ENCODE measurements at regions of chr2 and their contacts with region 1.

Region 1: DNA sequence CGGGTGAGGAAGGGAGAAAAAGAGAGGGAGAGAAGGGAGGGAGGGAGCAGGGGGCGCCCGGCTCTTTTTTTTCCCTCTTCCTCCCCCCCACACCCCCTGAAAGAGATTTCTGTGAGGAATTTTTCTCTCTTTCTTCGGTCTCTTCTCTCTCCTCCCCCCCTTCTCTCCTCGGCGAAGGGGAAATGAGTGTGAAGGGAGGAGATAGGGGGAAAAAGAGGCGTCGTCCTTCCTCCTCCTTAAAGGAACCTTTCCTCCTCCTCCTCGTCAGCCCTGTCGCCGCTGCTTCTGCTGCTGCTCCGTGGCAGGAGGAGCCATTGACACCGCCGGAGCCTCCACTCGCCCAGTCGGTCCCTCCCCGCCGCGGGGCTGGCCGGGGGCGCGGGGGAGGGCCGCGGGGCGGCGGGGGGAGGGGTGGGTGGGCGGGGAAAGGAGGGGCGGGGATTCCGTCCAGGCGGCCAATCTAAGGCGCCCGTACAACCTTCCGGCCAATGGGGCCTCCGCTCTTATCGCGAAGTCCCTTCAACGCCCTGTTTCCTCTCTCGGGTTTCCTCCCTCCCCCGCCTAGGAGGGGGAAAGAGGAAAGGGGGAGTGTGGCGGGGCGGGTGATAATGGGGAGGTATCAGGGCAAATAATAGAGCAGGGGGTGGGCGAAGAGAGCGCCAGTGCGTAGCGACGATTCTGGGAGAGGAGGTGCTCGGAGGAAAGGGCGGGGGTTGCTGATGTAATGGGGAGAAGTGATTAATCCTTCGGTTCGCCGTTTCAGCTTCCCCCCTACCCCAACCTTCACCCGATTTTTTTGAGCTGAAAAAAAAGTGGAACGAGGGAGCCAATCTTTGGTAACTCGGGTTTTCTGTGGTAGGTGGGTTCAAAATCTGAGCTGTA is at the start of gene FBXO11:
- DNase-seq: peak; percentile 87 to 99 (median 93)
- ATAC-seq: peak; percentile 77
- H3K4me3 ChIP-seq: peak within 1 kb of the TSS; percentile 86
- H3K4me3 Mint-ChIP-seq: peak within 1 kb of the TSS; percentile 85
- H3K27ac ChIP-seq: peak within 1 kb of the TSS; percentile 91 to 96
- H3K27ac Mint-ChIP-seq: peak within 1 kb of the TSS; percentile 91
- H3K4me1 ChIP-seq: peaks cover 8% of the 10 kb centered on the region
- H3K4me1 Mint-ChIP-seq: peaks cover 52% of the 10 kb centered on the region
- H3K27me3 ChIP-seq: no peaks in the 10 kb centered on the region
- H3K27me3 Mint-ChIP-seq: no peaks in the 10 kb centered on the region
- CTCF ChIP-seq: peak; percentile 60
- total RNA-seq, gene FBXO11: 121 to 126 TPM

Region 2: DNA sequence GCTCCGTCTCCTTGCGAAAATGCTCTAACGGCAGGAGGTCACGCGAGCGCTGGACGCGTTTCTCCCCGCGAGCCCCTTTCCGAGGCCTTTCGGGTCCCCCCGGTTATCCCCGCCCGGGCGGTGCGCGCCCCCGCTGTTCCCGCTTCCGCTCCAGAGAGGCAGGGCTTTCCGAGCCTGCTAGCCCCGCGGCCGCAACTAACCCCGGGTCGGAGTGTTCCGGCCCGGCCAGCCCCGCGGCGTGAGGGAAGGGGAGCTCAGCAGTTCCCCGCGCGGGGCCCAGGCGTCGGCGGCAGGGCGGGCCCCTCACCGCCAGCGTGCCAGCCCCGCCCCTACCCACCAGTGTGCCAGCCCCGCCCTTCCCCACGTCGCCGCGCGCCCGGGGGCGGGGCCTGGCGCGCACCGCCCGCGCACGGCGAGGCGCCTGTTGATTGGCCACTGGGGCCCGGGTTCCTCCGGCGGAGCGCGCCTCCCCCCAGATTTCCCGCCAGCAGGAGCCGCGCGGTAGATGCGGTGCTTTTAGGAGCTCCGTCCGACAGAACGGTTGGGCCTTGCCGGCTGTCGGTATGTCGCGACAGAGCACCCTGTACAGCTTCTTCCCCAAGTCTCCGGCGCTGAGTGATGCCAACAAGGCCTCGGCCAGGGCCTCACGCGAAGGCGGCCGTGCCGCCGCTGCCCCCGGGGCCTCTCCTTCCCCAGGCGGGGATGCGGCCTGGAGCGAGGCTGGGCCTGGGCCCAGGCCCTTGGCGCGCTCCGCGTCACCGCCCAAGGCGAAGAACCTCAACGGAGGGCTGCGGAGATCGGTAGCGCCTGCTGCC is 123.5 kb before region 1 on chr2 and contains the start of gene MSH6:
- CTCF ChIA-PET with region 1: interaction called, 4 read pairs
- POLR2A ChIA-PET with region 1: interaction called, 20 read pairs
- intact Hi-C with region 1: no loop called
- DNase-seq: peak; percentile 75 to 97 (median 86)
- ATAC-seq: peak; percentile 93
- H3K4me3 ChIP-seq: peak within 1 kb of the TSS; percentile 78
- H3K4me3 Mint-ChIP-seq: peak within 1 kb of the TSS; percentile 95
- H3K27ac ChIP-seq: peak within 1 kb of the TSS; percentile 64 to 84
- H3K27ac Mint-ChIP-seq: peak within 1 kb of the TSS; percentile 86
- H3K4me1 ChIP-seq: peaks cover 39% of the 10 kb centered on the region
- H3K4me1 Mint-ChIP-seq: peaks cover 29% of the 10 kb centered on the region
- H3K27me3 ChIP-seq: no peaks in the 10 kb centered on the region
- H3K27me3 Mint-ChIP-seq: no peaks in the 10 kb centered on the region
- CTCF ChIP-seq: no peak
- total RNA-seq, gene MSH6: 37.3 to 38.5 TPM

Region 3: GRCh38 chr2:47917276-47917961 is 11.0 kb after region 1 on chr2:
- CTCF ChIA-PET with region 1: interaction called, 4 read pairs
- POLR2A ChIA-PET with region 1: interaction called, 17 read pairs
- intact Hi-C with region 1: no loop called
- DNase-seq: peak in 1 of 14 experiments; percentile 18
- ATAC-seq: no peak
- H3K4me3 ChIP-seq: no peak overlapping the region
- H3K4me3 Mint-ChIP-seq: no peak overlapping the region
- H3K27ac ChIP-seq: no peak overlapping the region
- H3K27ac Mint-ChIP-seq: no peak overlapping the region
- H3K4me1 ChIP-seq: no peaks in the 10 kb centered on the region
- H3K4me1 Mint-ChIP-seq: peaks cover 10% of the 10 kb centered on the region
- H3K27me3 ChIP-seq: no peaks in the 10 kb centered on the region
- H3K27me3 Mint-ChIP-seq: no peaks in the 10 kb centered on the region
- CTCF ChIP-seq: no peak

Region 4: GRCh38 chr2:48107326-48107925 is 201.0 kb after region 1 on chr2:
- CTCF ChIA-PET with region 1: interaction called, 6 read pairs
- POLR2A ChIA-PET with region 1: interaction called, 5 read pairs
- intact Hi-C with region 1: loop called (anchors 1 to 2 kb)
- DNase-seq: peak in 2 of 14 experiments; percentile 20 to 34
- ATAC-seq: no peak
- H3K4me3 ChIP-seq: no peak overlapping the region
- H3K4me3 Mint-ChIP-seq: no peak overlapping the region
- H3K27ac ChIP-seq: no peak overlapping the region
- H3K27ac Mint-ChIP-seq: no peak overlapping the region
- H3K4me1 ChIP-seq: peaks cover 18% of the 10 kb centered on the region
- H3K4me1 Mint-ChIP-seq: peaks cover 11% of the 10 kb centered on the region
- H3K27me3 ChIP-seq: no peaks in the 10 kb centered on the region
- H3K27me3 Mint-ChIP-seq: no peaks in the 10 kb centered on the region
- CTCF ChIP-seq: no peak

Region 5: GRCh38 chr2:48347712-48348111 is 441.3 kb after region 1 on chr2:
- CTCF ChIA-PET with region 1: no interaction called
- POLR2A ChIA-PET with region 1: no interaction called
- intact Hi-C with region 1: loop called in 1 of 2 experiments (anchors 2 kb)
- DNase-seq: peak in 1 of 14 experiments; percentile 38
- ATAC-seq: no peak
- H3K4me3 ChIP-seq: no peak overlapping the region
- H3K4me3 Mint-ChIP-seq: peak overlapping the region; percentile 6
- H3K27ac ChIP-seq: no peak overlapping the region
- H3K27ac Mint-ChIP-seq: peak overlapping the region; percentile 48
- H3K4me1 ChIP-seq: peaks cover 41% of the 10 kb centered on the region
- H3K4me1 Mint-ChIP-seq: peaks cover 67% of the 10 kb centered on the region
- H3K27me3 ChIP-seq: no peaks in the 10 kb centered on the region
- H3K27me3 Mint-ChIP-seq: no peaks in the 10 kb centered on the region
- CTCF ChIP-seq: no peak

Region 6: DNA sequence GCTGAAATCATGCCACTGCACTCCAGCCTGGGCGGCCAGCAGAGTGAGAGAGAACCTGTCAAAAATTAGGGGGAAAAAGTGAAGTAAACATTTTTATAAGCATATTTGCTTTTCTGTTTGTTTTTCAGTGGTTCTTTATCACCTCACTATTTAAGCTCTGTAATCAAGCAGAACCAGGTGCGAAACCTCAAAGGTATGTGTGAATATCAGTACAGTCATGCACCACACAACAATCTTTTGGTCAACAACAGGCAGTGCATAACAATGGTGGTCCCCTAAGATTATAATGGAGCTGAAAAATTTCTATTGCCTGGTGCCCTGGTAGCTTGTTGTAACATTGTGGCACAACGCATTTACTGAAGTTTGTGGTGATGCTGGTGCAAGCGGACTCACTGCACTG is 456.1 kb after region 1 on chr2:
- CTCF ChIA-PET with region 1: no interaction called
- POLR2A ChIA-PET with region 1: no interaction called
- intact Hi-C with region 1: no loop called
- DNase-seq: peak in 1 of 14 experiments; percentile 44
- ATAC-seq: no peak
- H3K4me3 ChIP-seq: no peak overlapping the region
- H3K4me3 Mint-ChIP-seq: no peak overlapping the region
- H3K27ac ChIP-seq: no peak overlapping the region
- H3K27ac Mint-ChIP-seq: no peak overlapping the region
- H3K4me1 ChIP-seq: peaks cover 12% of the 10 kb centered on the region
- H3K4me1 Mint-ChIP-seq: peaks cover 40% of the 10 kb centered on the region
- H3K27me3 ChIP-seq: no peaks in the 10 kb centered on the region
- H3K27me3 Mint-ChIP-seq: no peaks in the 10 kb centered on the region
- CTCF ChIP-seq: no peak

Region 7: GRCh38 chr2:48448274-48449061 is 542.1 kb after region 1 on chr2:
- CTCF ChIA-PET with region 1: no interaction called
- POLR2A ChIA-PET with region 1: interaction called, 4 read pairs
- intact Hi-C with region 1: loop called in 1 of 2 experiments (anchors 2 kb)
- DNase-seq: peak in 4 of 14 experiments; percentile 4 to 55 (median 42)
- ATAC-seq: peak; percentile 77
- H3K4me3 ChIP-seq: peak overlapping the region; percentile 13
- H3K4me3 Mint-ChIP-seq: peak overlapping the region; percentile 81
- H3K27ac ChIP-seq: peak overlapping the region; percentile 58 to 70
- H3K27ac Mint-ChIP-seq: peak overlapping the region; percentile 90
- H3K4me1 ChIP-seq: peaks cover 23% of the 10 kb centered on the region
- H3K4me1 Mint-ChIP-seq: peaks cover 64% of the 10 kb centered on the region
- H3K27me3 ChIP-seq: no peaks in the 10 kb centered on the region
- H3K27me3 Mint-ChIP-seq: no peaks in the 10 kb centered on the region
- CTCF ChIP-seq: no peak

Measured in CD4-positive, alpha-beta T cell (primary cell).